Calu3 (cell line): ENCODE measurements at regions of chr5 and their contacts with region 1.

Region 1: DNA sequence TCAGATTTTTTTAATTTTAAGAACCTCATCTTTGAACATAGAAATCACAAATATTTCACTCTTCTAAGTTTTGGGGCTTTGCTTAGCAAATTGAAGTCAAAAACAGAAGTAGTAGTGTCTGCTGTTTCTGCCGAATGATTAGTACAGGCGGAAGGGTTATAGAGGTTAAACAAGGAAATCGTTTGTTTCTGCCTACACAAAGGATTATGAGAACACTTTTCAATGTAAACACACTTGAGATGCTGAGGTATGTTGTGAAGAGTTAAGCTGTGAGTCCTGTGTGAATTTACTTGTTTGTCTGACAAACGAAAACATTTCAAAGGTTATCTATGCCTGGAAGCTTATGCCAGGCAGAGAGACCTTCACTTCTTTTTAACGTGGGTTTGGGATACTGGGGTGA is 224.8 kb downstream of the CETN3 start:
- DNase-seq: no peak
- H3K4me3 Mint-ChIP-seq: no peak overlapping the region
- H3K27ac Mint-ChIP-seq: no peak overlapping the region
- H3K4me1 Mint-ChIP-seq: peaks cover 26% of the 10 kb centered on the region
- H3K27me3 Mint-ChIP-seq: no peaks in the 10 kb centered on the region
- CTCF ChIP-seq: no peak

Region 2: DNA sequence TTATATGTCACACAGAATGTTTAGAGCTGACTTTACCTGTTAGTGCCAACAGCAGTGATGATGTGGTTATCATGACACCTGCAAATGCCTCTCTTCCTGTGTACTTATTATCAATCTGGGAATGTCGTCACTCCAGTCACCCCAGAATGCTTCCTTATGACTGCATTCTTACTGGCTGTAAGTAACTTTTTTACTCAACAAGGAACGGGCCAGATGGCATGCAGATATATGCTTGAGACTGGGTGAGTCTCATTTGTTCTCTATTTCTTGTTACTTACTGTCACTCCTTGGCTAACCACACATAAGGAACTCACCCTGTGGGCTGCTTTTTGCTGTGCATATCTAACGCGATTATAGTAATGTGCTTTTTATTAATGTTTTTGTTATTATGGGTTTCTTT is 916.3 kb before region 1 on chr5:
- CTCF ChIA-PET with region 1: no interaction called
- intact Hi-C with region 1: loop called (anchors 10 kb)
- DNase-seq: no peak
- H3K4me3 Mint-ChIP-seq: no peak overlapping the region
- H3K27ac Mint-ChIP-seq: no peak overlapping the region
- H3K4me1 Mint-ChIP-seq: peaks cover 6% of the 10 kb centered on the region
- H3K27me3 Mint-ChIP-seq: no peaks in the 10 kb centered on the region
- CTCF ChIP-seq: no peak

Region 3: DNA sequence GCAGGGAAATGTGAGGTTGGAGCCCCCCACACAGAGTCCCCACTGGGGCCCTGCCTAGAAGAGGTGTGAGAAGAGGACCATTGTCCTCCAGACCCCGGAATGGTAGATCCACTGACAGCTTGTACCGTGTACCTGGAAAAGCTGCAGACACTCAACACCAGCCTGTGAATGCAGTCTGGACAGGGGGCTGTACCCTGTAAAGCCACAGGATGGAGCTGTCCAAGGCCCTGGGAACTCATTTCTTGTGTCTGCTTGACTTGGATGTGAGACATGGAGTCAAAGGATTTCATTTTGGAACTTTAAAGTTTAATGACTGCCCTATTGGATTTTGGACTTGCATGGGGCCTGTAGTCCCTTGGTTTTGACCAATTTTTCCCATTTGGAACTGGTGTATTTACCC is 766.8 kb before region 1 on chr5:
- CTCF ChIA-PET with region 1: no interaction called
- intact Hi-C with region 1: no loop called
- DNase-seq: no peak
- H3K4me3 Mint-ChIP-seq: no peak overlapping the region
- H3K27ac Mint-ChIP-seq: no peak overlapping the region
- H3K4me1 Mint-ChIP-seq: peaks cover 21% of the 10 kb centered on the region
- H3K27me3 Mint-ChIP-seq: no peaks in the 10 kb centered on the region
- CTCF ChIP-seq: no peak

Region 4: GRCh38 chr5:89445106-89445745 is 739.5 kb before region 1 on chr5:
- CTCF ChIA-PET with region 1: no interaction called
- intact Hi-C with region 1: loop called (anchors 10 kb)
- DNase-seq: no peak
- H3K4me3 Mint-ChIP-seq: no peak overlapping the region
- H3K27ac Mint-ChIP-seq: no peak overlapping the region
- H3K4me1 Mint-ChIP-seq: peaks cover 35% of the 10 kb centered on the region
- H3K27me3 Mint-ChIP-seq: no peaks in the 10 kb centered on the region
- CTCF ChIP-seq: no peak

Region 5: GRCh38 chr5:89729623-89730301 is 455.0 kb before region 1 on chr5:
- CTCF ChIA-PET with region 1: no interaction called
- intact Hi-C with region 1: loop called (anchors 10 kb)
- DNase-seq: no peak
- H3K4me3 Mint-ChIP-seq: no peak overlapping the region
- H3K27ac Mint-ChIP-seq: no peak overlapping the region
- H3K4me1 Mint-ChIP-seq: peaks cover 9% of the 10 kb centered on the region
- H3K27me3 Mint-ChIP-seq: no peaks in the 10 kb centered on the region
- CTCF ChIP-seq: peak; percentile 41